ENCODE measurements at regions of chr3 and their contacts with region 1.

Region 1: DNA sequence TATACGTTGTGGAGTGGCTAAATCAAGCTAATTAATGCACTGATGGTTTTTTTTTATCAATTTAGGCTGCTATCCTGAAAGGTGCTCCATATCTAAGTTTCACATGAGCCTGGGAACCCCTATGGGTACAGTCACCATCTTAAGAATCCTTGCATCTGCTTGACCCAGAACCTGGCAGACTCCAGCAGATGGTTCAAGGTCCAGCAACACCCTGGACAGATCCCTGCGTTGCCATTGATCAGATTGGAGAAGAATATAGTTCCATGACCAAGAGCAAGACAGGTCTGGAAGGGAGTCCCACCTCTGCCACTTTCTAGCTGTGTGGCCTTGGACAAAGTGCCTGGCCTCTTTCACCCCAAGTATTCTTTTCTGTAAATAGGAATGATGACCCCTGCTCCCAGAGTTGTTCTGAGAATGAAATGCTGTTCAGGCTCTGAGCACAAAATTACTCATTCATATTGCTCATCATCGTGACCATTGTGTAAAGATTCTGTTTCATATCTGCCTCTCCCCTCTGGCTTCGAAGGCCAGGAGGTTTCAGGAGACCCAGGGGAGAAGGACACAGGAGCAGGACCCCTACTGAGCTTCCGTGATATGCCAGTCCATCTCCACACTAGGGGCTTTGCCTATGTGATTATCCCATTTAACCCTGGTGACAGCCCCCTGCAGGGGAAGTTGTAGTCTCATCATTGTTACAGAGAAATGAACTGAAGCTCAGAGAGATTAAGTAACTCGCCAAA is 30.0 kb upstream of the TSEN2 start:
- DNase-seq: peak in 2 of 3 donors; percentile 27 to 46
- H3K4me3 ChIP-seq: no peak overlapping the region
- H3K4me3 Mint-ChIP-seq: no peak overlapping the region
- H3K27ac ChIP-seq: peak overlapping the region in 1 of 2 donors; percentile 9
- H3K27ac Mint-ChIP-seq: peak overlapping the region in 5 of 7 donors; percentile 16 to 84 (median 42)
- H3K4me1 ChIP-seq: peaks cover 24 to 40% of the 10 kb centered on the region in 2 donors
- H3K4me1 Mint-ChIP-seq: peaks cover 42% of the 10 kb centered on the region
- H3K27me3 ChIP-seq: no peaks in the 10 kb centered on the region
- H3K27me3 Mint-ChIP-seq: peaks cover 0 to 7% (median 2%) of the 10 kb centered on the region in 3 donors
- CTCF ChIP-seq: no peak

Region 2: DNA sequence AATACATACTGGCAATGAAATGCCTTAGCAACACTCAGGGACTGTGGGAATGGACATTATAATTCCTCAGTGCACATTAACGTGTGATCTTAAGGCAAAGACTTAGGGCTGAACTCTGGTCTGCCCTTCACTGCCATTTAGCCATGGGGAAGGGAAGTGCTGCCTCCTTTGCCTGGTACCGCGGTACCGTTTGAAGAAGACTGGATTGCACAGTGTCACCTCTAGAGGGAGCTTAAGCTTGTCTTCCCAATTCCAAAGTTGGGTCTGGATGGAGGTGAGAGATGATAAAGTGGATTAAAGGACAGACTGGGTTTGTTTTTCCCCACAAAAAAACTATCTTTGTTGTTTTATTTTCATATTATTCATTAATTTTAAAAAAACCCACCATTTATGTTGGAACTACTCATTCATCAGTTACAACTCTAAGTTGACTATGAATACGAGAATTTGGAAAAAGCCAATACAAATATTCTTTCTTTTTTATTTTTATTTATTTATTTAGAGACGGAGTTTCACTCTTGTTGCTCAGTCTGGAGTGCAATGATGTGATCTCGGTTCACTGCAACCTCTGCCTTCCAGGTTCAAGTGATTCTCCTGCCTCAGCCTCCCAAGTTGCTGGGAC is 510.1 kb before region 1 on chr3:
- intact Hi-C with region 1: no loop called
- DNase-seq: no peak
- H3K4me3 ChIP-seq: no peak overlapping the region
- H3K4me3 Mint-ChIP-seq: no peak overlapping the region
- H3K27ac ChIP-seq: no peak overlapping the region
- H3K27ac Mint-ChIP-seq: no peak overlapping the region
- H3K4me1 ChIP-seq: no peaks in the 10 kb centered on the region
- H3K4me1 Mint-ChIP-seq: no peaks in the 10 kb centered on the region
- H3K27me3 ChIP-seq: no peaks in the 10 kb centered on the region
- H3K27me3 Mint-ChIP-seq: peaks cover 2 to 10% (median 6%) of the 10 kb centered on the region in 3 donors
- CTCF ChIP-seq: peak; percentile 29

Region 3: GRCh38 chr3:12273045-12273695 is 181.1 kb before region 1 on chr3:
- intact Hi-C with region 1: loop called in 1 of 2 experiments (anchors 10 kb)
- DNase-seq: no peak
- H3K4me3 ChIP-seq: no peak overlapping the region
- H3K4me3 Mint-ChIP-seq: no peak overlapping the region
- H3K27ac ChIP-seq: no peak overlapping the region
- H3K27ac Mint-ChIP-seq: no peak overlapping the region
- H3K4me1 ChIP-seq: peaks cover 35 to 42% of the 10 kb centered on the region in 2 donors
- H3K4me1 Mint-ChIP-seq: peaks cover 41% of the 10 kb centered on the region
- H3K27me3 ChIP-seq: no peaks in the 10 kb centered on the region
- H3K27me3 Mint-ChIP-seq: peaks cover 0 to 1% (median 0%) of the 10 kb centered on the region in 3 donors
- CTCF ChIP-seq: no peak

Region 4: DNA sequence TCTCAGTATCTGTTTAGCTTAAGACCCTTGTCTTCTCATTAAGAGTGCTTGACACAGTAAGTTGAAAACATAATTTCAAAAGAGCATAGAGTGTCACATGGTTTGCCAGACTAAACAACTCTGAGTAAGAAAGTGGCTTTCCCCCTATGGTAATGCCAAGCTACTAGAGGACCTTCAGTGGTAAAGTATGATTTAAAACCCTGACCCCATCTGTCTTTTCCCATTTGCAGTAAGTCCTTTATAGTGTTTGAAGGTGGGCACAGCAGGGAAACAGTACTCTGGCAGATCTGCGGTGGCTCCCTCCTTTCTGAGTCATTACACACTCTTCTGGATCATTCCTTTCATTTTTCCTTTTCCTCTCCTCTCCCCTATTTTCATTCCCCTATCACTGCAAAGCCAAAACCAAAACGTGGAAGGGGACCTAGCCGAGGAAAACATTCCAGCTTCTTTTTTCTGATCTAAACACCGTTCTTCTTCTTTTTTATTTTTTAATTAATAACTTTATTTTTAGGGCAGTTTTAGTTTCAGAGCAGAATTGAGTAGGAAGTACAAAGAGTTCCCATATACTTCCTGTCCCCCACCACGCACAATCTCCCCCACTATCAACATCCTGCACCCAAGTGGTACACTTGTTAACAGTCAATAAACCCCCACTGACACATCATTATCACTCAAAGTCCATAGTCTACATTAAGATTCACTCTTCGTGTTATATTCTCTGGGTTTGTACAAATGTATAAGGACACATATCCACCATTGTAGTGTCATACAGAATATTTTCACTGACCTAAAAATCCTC is 90.7 kb before region 1 on chr3:
- intact Hi-C with region 1: loop called in 1 of 2 experiments (anchors 10 kb)
- DNase-seq: peak in 1 of 3 donors; percentile 17
- H3K4me3 ChIP-seq: no peak overlapping the region
- H3K4me3 Mint-ChIP-seq: no peak overlapping the region
- H3K27ac ChIP-seq: no peak overlapping the region
- H3K27ac Mint-ChIP-seq: peak overlapping the region in 2 of 7 donors; percentile 2 to 36
- H3K4me1 ChIP-seq: peaks cover 0 to 4% of the 10 kb centered on the region in 2 donors
- H3K4me1 Mint-ChIP-seq: peaks cover 9% of the 10 kb centered on the region
- H3K27me3 ChIP-seq: no peaks in the 10 kb centered on the region
- H3K27me3 Mint-ChIP-seq: no peaks in the 10 kb centered on the region
- CTCF ChIP-seq: no peak

Measured in CD14-positive monocyte (primary cell).